Activated naive CD4-positive, alpha-beta T cell treated with anti-CD3 and anti-CD28 coated beads for 36 hours (primary cell): ENCODE measurements at regions of chr14 and their contacts with region 1.

Region 1: DNA sequence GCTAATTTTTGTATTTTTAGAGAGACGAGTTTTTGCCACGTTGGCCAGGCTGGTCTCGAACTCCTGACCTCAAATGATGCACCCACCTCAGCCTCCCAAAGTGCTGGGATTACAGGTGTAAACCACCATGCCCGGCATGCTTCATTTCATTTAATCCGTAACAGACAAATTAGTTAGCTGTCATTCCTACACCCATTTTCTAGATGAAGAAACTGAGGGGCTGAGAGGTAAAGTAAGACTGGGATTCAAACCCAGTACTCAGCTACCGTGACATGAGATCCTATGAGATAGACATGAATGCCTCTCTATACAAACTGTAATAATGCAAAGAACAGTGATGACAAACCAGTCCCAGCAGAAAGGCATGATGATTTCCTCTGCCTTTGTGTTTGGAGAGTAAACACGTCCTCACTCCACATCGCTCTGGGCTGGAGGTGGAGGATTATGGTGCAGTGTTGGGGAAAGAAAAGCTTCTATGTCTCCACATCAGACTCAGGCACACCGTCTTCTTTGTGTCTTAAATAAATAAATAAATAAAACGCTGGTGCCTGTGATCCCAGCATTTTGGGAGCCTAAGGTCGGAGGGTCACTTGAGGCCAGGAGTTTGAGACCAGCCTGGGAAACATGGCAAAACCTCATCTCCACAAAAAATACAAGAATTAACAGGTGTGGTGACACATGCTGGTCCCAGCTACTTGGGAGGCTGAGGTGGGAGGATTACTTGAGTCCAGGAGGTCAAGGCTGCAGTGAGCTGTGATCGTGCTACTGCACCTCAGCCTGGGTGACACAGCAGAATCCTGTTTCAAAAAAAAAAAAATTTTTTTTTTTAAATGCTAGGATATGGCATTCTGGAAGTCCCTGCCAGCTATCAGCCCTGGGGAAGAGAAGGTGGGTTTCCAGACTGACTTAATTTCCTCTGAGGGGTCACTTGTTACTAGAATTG is 10.5 kb downstream of the VSX2 start:
- DNase-seq: no peak
- H3K4me3 Mint-ChIP-seq: no peak overlapping the region
- H3K27ac Mint-ChIP-seq: no peak overlapping the region
- H3K4me1 Mint-ChIP-seq: peaks cover 6% of the 10 kb centered on the region
- H3K27me3 Mint-ChIP-seq: peaks cover 26% of the 10 kb centered on the region

Region 2: GRCh38 chr14:74109369-74109768 is 140.3 kb before region 1 on chr14:
- CTCF ChIA-PET with region 1: interaction called, 6 read pairs
- intact Hi-C with region 1: loop called (anchors 1 kb)
- DNase-seq: no peak
- H3K4me3 Mint-ChIP-seq: no peak overlapping the region
- H3K27ac Mint-ChIP-seq: no peak overlapping the region
- H3K4me1 Mint-ChIP-seq: no peaks in the 10 kb centered on the region
- H3K27me3 Mint-ChIP-seq: no peaks in the 10 kb centered on the region

Region 3: DNA sequence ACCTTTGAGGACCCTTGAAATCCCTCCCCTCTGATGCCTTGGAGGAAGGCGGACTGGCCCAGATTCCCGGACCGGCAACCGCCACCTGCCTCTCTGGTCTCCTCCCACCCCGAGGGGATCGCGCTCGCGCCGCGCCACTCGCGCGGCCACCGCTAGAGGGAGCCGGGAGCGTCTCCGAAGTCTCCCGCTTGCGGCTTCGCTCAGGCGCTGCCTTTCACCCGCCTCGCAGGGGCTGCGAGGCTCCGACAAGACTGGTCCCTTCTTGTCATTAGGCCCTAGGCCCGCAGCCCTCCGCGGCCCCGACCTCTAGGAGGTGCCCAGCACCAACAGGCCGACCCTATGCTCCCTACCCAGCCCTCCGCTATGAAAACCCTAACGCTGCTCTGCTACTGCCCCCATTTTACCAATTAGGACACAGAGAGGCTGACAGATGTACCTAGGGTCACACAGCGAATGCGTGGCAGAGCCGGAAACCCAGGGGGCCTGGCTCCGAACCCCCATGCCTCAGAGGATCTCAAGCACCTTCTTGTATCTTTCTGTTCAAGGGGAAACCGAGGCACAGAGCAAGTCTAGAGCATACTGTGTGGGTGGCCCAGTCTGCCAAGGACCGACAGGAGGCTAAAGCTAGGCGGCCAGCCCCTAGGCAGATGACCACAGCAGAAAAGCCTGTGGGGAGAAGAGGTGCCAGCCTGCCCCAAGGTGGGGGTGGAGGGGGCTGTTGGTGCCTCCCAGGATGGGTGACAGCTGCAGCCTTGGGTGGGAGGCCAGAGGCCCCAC is 31.8 kb before region 1 on chr14:
- CTCF ChIA-PET with region 1: interaction called, 7 read pairs
- intact Hi-C with region 1: loop called (anchors 1 kb)
- DNase-seq: peak; percentile 76
- H3K4me3 Mint-ChIP-seq: no peak overlapping the region
- H3K27ac Mint-ChIP-seq: no peak overlapping the region
- H3K4me1 Mint-ChIP-seq: no peaks in the 10 kb centered on the region
- H3K27me3 Mint-ChIP-seq: peaks cover 7% of the 10 kb centered on the region

Region 4: DNA sequence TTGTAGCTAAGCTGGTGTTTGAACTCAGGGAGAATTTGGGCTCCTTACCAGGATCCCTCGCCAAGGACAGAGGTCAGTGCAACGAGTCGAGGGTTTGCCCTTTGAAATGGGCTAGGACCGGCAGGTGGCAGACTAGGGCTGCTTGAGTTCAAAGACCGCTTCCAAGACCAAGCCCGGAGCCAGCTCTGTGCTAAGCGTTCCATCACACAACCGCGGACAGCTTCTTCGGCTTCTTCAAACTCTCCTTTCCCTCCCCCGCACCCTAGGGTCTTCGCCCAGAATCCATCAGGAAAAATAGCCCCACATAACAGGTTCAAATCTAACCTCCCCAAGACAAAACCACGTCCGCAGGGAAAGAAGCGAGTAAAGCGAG is 1328.0 kb after region 1 on chr14:
- CTCF ChIA-PET with region 1: no interaction called
- intact Hi-C with region 1: no loop called
- DNase-seq: peak; percentile 88
- H3K4me3 Mint-ChIP-seq: peak overlapping the region; percentile 82
- H3K27ac Mint-ChIP-seq: peak overlapping the region; percentile 78
- H3K4me1 Mint-ChIP-seq: peaks cover 22% of the 10 kb centered on the region
- H3K27me3 Mint-ChIP-seq: no peaks in the 10 kb centered on the region

Region 5: GRCh38 chr14:75794615-75795038 is 1544.9 kb after region 1 on chr14:
- CTCF ChIA-PET with region 1: no interaction called
- intact Hi-C with region 1: no loop called
- DNase-seq: no peak
- H3K4me3 Mint-ChIP-seq: no peak overlapping the region
- H3K27ac Mint-ChIP-seq: no peak overlapping the region
- H3K4me1 Mint-ChIP-seq: no peaks in the 10 kb centered on the region
- H3K27me3 Mint-ChIP-seq: no peaks in the 10 kb centered on the region